T-cell (primary cell): ENCODE measurements at regions of chr1 and their contacts with region 1.

Region 1: DNA sequence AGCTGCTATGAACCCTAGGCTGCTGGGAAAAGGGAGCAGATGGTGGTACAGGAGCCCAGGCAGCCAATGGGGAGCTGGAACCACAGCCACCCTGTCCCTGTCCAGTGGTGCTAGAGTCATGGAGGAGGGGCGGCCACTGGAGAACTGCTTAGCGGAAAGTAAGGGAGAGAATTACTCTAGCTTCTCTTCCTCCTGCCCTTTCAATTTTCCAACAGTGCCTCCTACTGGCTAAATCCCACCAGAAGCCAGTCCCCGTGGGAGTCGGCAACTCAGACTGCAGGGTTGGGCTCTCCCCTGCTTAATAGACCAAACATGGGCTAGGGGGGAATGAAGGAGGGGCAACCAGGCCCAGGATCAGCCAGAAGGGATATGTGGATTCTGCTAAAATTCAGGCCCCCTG is 154.5 kb downstream of the ACTL8 start:
- DNase-seq: no peak
- ATAC-seq: no peak
- H3K4me3 ChIP-seq: no peak overlapping the region
- H3K4me3 Mint-ChIP-seq: no peak overlapping the region
- H3K27ac ChIP-seq: no peak overlapping the region
- H3K27ac Mint-ChIP-seq: no peak overlapping the region
- H3K4me1 ChIP-seq: no peaks in the 10 kb centered on the region
- H3K4me1 Mint-ChIP-seq: no peaks in the 10 kb centered on the region
- H3K27me3 ChIP-seq: peaks cover 0 to 26% of the 10 kb centered on the region in 2 experiments
- H3K27me3 Mint-ChIP-seq: peaks cover 31 to 45% of the 10 kb centered on the region in 2 donors

Region 2: DNA sequence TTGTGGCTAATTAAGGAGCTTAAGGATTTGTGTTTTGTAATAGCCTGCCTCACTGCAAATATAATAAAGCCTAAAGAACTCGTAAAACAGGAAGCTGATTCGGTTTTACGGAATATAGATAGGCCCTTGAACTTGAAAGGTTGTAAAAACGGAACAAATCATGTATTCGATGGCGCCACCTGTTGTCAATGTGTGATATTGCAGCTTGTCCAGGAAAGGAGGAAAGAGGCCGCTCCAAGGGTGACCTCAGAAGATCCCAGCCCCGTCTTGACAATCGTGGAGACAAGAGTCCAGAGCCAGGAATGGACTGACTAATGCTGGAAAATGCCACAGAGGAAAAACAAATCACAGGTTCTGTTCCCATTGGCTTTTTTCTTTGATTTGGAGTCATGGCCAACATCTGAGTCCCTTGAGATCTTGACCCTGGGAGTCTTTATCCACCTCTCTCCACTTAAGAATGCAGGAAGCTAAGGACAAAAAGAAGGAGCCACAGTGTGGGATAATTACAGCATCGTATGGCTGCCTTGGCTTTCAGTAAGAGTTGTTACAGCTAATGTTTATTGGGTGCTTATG is 190.9 kb after region 1 on chr1:
- CTCF ChIA-PET with region 1: interaction called in 1 of 2 experiments, 13 read pairs
- POLR2A ChIA-PET with region 1: no interaction called
- DNase-seq: peak in 25 of 35 experiments; percentile 6 to 58 (median 24)
- ATAC-seq: no peak
- H3K4me3 ChIP-seq: no peak overlapping the region
- H3K4me3 Mint-ChIP-seq: no peak overlapping the region
- H3K27ac ChIP-seq: no peak overlapping the region
- H3K27ac Mint-ChIP-seq: no peak overlapping the region
- H3K4me1 ChIP-seq: no peaks in the 10 kb centered on the region
- H3K4me1 Mint-ChIP-seq: no peaks in the 10 kb centered on the region
- H3K27me3 ChIP-seq: peaks cover 0 to 28% of the 10 kb centered on the region in 2 experiments
- H3K27me3 Mint-ChIP-seq: peaks cover 36 to 48% of the 10 kb centered on the region in 2 donors

Region 3: GRCh38 chr1:18199462-18199861 is 289.8 kb after region 1 on chr1:
- CTCF ChIA-PET with region 1: no interaction called
- POLR2A ChIA-PET with region 1: no interaction called
- DNase-seq: no peak
- ATAC-seq: no peak
- H3K4me3 ChIP-seq: no peak overlapping the region
- H3K4me3 Mint-ChIP-seq: no peak overlapping the region
- H3K27ac ChIP-seq: no peak overlapping the region
- H3K27ac Mint-ChIP-seq: no peak overlapping the region
- H3K4me1 ChIP-seq: no peaks in the 10 kb centered on the region
- H3K4me1 Mint-ChIP-seq: no peaks in the 10 kb centered on the region
- H3K27me3 ChIP-seq: peaks cover 0 to 48% of the 10 kb centered on the region in 2 experiments
- H3K27me3 Mint-ChIP-seq: peaks cover 36 to 44% of the 10 kb centered on the region in 2 donors